WTC11 (cell line): ENCODE measurements at regions of chr12 and their contacts with region 1.

Region 1: DNA sequence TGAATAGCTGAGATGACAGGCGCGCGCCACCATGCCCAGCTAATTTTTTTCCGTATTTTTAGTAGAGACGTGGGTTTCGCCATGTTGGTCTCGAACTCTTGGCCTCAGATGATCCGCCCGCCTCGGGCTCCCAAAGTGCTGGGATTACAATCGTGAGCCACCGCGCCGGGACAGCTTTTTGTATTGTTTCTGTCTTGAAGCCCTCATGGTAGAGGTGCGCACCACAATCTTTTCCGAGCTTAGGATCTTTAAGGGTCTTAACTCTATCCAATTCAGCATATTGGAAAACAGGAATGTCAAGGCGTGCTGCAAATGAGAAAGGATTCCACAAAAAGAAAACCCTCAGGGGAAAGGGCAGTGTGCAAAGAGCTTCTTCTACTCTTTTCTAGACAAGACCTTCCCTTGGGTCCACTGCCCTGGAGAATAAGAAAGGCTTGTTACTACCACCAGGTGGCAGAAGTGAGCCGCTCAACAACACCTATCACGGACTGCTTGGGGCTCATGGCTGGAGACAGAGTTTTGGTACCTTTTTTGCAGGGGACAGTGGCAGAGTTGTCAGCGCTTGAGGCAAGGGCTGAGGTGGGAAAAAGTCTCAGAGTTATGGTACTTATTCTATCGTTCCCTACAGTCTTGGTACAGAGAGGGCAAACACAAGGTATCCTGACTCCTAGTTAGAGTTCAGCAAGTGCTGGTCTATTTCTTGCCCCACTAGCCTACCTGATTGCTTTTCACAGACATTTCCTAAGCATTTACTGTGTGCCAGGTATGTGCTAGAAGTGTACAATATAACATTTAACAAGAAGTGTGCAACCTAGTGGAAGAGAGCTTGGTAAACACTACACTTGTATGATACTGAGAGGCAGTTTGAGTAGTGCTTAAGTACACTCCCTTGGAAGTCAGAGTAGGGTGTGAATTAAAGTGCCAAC is 16.4 kb upstream of the SP7 start:
- DNase-seq: peak; percentile 85
- ATAC-seq: peak; percentile 99
- H3K4me3 Mint-ChIP-seq: no peak overlapping the region
- H3K27ac Mint-ChIP-seq: peak overlapping the region; percentile 76; the same call in 1 of the 2 replicates
- H3K4me1 Mint-ChIP-seq: 0 out of 2 replicates have a peak, but pooled peaks cover 4% of the 10 kb centered on the region
- H3K27me3 Mint-ChIP-seq: peaks cover 2% of the 10 kb centered on the region
- CTCF ChIP-seq: peak; percentile 87

Region 2: DNA sequence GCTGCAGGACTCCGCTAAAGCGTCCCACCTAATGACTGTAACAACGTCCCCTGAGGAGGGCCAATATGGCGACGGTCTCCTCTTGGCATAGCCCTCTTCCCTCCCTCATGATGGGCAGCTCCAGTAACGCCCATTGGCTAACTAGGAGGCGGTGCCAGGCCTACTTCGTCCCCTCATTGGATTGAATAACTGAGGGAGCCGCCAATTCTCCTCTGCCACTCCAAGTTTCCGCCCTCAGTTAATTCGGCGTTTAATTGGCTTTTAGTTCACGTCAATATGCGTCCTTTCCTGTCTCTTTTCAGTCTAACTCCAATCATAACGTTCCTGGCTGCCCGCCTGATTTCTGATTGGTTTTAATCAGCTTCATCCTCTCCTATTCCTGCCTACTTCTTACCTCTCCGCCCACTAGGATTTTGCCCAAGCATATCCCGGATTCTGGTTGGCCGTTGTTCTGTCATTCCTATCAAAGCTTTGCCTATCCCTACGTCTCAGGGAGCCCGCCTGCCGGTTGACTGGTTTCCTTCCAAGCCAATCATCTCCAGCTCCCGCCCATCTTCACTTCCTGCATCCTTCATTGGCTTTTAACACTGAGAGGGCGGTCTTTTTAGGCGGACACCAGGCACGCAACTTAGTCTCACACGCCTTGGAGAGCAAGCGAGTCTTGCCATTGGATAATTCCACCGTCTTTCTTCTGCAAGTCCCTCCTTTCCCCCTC is 27.0 kb after region 1 on chr12:
- CTCF ChIA-PET with region 1: interaction called, 103 read pairs
- POLR2A ChIA-PET with region 1: interaction called, 8 read pairs
- DNase-seq: peak; percentile 95
- ATAC-seq: peak; percentile 87
- H3K4me3 Mint-ChIP-seq: no peak overlapping the region
- H3K27ac Mint-ChIP-seq: no peak overlapping the region
- H3K4me1 Mint-ChIP-seq: peaks cover 27% of the 10 kb centered on the region
- H3K27me3 Mint-ChIP-seq: peaks cover 3% of the 10 kb centered on the region; the same call in 1 of the 2 replicates
- CTCF ChIP-seq: no peak

Region 3: GRCh38 chr12:53424626-53425514 is 72.3 kb after region 1 on chr12:
- CTCF ChIA-PET with region 1: interaction called, 113 read pairs
- POLR2A ChIA-PET with region 1: interaction called, 4 read pairs
- DNase-seq: no peak
- ATAC-seq: no peak
- H3K4me3 Mint-ChIP-seq: no peak overlapping the region
- H3K27ac Mint-ChIP-seq: no peak overlapping the region
- H3K4me1 Mint-ChIP-seq: peaks cover 10% of the 10 kb centered on the region
- H3K27me3 Mint-ChIP-seq: no peaks in the 10 kb centered on the region
- CTCF ChIP-seq: no peak

Region 4: GRCh38 chr12:53492830-53493611 is 140.4 kb after region 1 on chr12:
- CTCF ChIA-PET with region 1: interaction called, 10 read pairs
- POLR2A ChIA-PET with region 1: no interaction called
- DNase-seq: peak; percentile 96
- ATAC-seq: peak; percentile 78
- H3K4me3 Mint-ChIP-seq: peak overlapping the region; percentile 88
- H3K27ac Mint-ChIP-seq: peak overlapping the region; percentile 99
- H3K4me1 Mint-ChIP-seq: peaks cover 46% of the 10 kb centered on the region
- H3K27me3 Mint-ChIP-seq: no peaks in the 10 kb centered on the region
- CTCF ChIP-seq: no peak

Region 5: GRCh38 chr12:53508534-53509199 is 156.1 kb after region 1 on chr12:
- CTCF ChIA-PET with region 1: interaction called, 21 read pairs
- POLR2A ChIA-PET with region 1: no interaction called
- DNase-seq: peak; percentile 94
- ATAC-seq: peak; percentile 93
- H3K4me3 Mint-ChIP-seq: no peak overlapping the region
- H3K27ac Mint-ChIP-seq: no peak overlapping the region
- H3K4me1 Mint-ChIP-seq: peaks cover 4% of the 10 kb centered on the region; the same call in 1 of the 2 replicates
- H3K27me3 Mint-ChIP-seq: no peaks in the 10 kb centered on the region
- CTCF ChIP-seq: peak; percentile 83